ENCODE measurements at regions of chr19 and their contacts with region 1.

Region 1: GRCh38 chr19:47618771-47619170 is 9.8 kb downstream of the BICRA start:
- DNase-seq: no peak
- H3K4me3 ChIP-seq: no peak overlapping the region
- H3K27ac ChIP-seq: no peak overlapping the region
- H3K4me1 ChIP-seq: no peaks in the 10 kb centered on the region
- H3K27me3 ChIP-seq: no peaks in the 10 kb centered on the region
- CTCF ChIP-seq: no peak

Region 2: GRCh38 chr19:47510008-47510407 is 108.8 kb before region 1 on chr19:
- CTCF ChIA-PET with region 1: no interaction called
- POLR2A ChIA-PET with region 1: no interaction called
- intact Hi-C with region 1: no loop called
- DNase-seq: no peak
- H3K4me3 ChIP-seq: no peak overlapping the region
- H3K27ac ChIP-seq: no peak overlapping the region
- H3K4me1 ChIP-seq: peaks cover 14% of the 10 kb centered on the region
- H3K27me3 ChIP-seq: no peaks in the 10 kb centered on the region
- CTCF ChIP-seq: no peak

Region 3: DNA sequence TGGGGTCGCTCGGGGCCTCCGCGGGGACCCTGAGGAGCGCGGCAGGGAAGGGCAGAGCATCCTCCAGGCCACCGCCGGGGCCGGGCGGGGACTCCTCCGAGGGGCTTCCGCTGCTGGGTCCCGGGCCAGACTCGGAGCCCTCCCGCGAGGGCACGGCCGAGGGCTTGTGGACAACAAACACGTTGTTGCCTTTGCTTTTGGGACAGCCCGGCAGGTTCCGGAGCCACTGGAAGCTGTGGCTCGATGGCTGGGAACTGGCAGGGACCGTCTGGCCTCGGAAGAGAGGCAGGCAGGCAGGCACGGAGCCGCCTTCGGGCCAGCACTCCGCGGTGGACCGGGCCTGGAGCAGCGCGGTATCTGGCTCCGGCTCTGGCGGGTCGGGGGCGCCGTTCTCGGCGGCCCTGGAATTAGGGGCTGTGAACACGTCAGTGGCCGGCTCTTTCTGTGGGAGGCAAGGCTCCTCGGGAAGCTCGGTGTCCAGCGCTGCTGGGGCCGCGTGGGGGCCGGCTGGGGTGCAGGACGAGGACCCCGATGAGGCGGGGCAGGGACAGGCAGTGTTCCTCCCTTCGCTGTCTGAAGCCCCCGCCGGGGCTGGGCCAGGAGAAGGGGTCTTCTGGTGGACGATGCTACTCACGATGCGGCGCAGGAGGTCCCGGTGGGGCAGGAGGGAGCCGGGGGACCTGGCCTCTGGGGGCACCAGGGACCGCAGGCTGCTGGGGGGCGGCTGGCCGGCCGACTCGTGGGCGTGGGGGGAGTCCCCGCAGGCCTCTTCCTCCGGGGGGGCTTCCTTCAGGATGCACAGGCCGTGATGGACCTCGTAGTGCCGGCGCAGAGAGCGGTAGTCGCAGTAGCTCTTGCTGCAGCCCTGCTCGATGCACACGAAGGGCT is 73.5 kb before region 1 on chr19:
- CTCF ChIA-PET with region 1: no interaction called
- POLR2A ChIA-PET with region 1: interaction called, 14 read pairs
- intact Hi-C with region 1: no loop called
- DNase-seq: no peak
- H3K4me3 ChIP-seq: no peak overlapping the region
- H3K27ac ChIP-seq: no peak overlapping the region
- H3K4me1 ChIP-seq: no peaks in the 10 kb centered on the region
- H3K27me3 ChIP-seq: peaks cover 9% of the 10 kb centered on the region; the same call in 1 of the 2 replicates
- CTCF ChIP-seq: no peak

Region 4: GRCh38 chr19:47637550-47637949 is 18.8 kb after region 1 on chr19:
- CTCF ChIA-PET with region 1: interaction called, 3 read pairs
- POLR2A ChIA-PET with region 1: interaction called, 23 read pairs
- intact Hi-C with region 1: no loop called
- DNase-seq: no peak
- H3K4me3 ChIP-seq: no peak overlapping the region
- H3K27ac ChIP-seq: no peak overlapping the region
- H3K4me1 ChIP-seq: peaks cover 21% of the 10 kb centered on the region
- H3K27me3 ChIP-seq: no peaks in the 10 kb centered on the region
- CTCF ChIP-seq: no peak